MCF 10A (cell line): ENCODE measurements at regions of chr12 and their contacts with region 1.

Region 1: GRCh38 chr12:52495389-52495788 is 2.3 kb upstream of the KRT6A start:
- DNase-seq: peak; percentile 95
- H3K4me3 Mint-ChIP-seq: peak overlapping the region; percentile 93
- H3K27ac Mint-ChIP-seq: peak overlapping the region; percentile 95
- H3K4me1 Mint-ChIP-seq: peaks cover 64% of the 10 kb centered on the region
- H3K27me3 Mint-ChIP-seq: no peaks in the 10 kb centered on the region
- CTCF ChIP-seq: no peak

Region 2: GRCh38 chr12:52372216-52373154 is 122.9 kb before region 1 on chr12:
- CTCF ChIA-PET with region 1: interaction called, 12 read pairs
- POLR2A ChIA-PET with region 1: interaction called, 28 read pairs
- intact Hi-C with region 1: no loop called
- DNase-seq: peak; percentile 86
- H3K4me3 Mint-ChIP-seq: no peak overlapping the region
- H3K27ac Mint-ChIP-seq: no peak overlapping the region
- H3K4me1 Mint-ChIP-seq: no peaks in the 10 kb centered on the region
- H3K27me3 Mint-ChIP-seq: peaks cover 11% of the 10 kb centered on the region
- CTCF ChIP-seq: peak; percentile 90

Region 3: GRCh38 chr12:52398176-52398829 is 97.1 kb before region 1 on chr12:
- CTCF ChIA-PET with region 1: interaction called, 16 read pairs
- POLR2A ChIA-PET with region 1: interaction called, 24 read pairs
- intact Hi-C with region 1: no loop called
- DNase-seq: no peak
- H3K4me3 Mint-ChIP-seq: no peak overlapping the region
- H3K27ac Mint-ChIP-seq: no peak overlapping the region
- H3K4me1 Mint-ChIP-seq: peaks cover 15% of the 10 kb centered on the region
- H3K27me3 Mint-ChIP-seq: no peaks in the 10 kb centered on the region
- CTCF ChIP-seq: no peak

Region 4: DNA sequence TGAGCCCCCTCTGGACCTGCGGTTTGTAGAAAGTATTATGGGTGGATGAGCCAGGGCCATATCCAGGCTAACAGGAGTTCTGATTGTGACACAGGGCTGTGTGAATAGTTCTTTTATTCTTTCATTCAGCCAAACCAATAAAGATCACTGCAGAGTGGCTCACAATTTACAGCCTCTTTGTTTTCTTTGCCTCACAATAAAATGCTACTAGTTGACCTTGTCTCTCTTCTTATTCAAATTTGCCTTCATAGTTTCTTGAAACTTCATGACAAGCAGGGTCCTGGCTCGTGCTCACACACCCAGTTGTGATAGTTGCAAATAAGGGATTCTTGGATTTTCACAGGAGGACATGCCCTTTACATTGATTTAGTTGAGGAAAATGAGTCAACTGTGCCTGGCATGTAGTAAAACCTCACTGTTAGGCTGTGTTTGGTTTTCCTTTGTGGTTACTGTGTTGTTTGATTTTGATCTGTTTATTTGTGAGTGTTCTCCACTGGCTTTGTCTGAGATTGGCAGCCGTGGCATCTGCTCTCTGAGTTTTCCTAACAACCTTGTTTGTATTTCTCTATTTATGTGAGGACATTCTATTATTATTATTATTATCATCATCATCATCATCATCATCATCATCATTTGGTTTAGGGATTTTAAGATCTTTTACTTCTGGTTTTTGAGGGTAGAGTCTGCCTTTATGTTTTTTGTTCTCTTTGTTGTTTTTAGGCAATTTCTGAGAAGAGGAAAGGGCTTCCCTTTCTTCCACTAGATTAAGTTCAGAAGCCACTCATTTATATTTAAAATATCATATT is 40.8 kb before region 1 on chr12:
- CTCF ChIA-PET with region 1: no interaction called
- POLR2A ChIA-PET with region 1: interaction called, 30 read pairs
- intact Hi-C with region 1: no loop called
- DNase-seq: peak; percentile 60
- H3K4me3 Mint-ChIP-seq: no peak overlapping the region
- H3K27ac Mint-ChIP-seq: no peak overlapping the region
- H3K4me1 Mint-ChIP-seq: peaks cover 29% of the 10 kb centered on the region
- H3K27me3 Mint-ChIP-seq: no peaks in the 10 kb centered on the region
- CTCF ChIP-seq: no peak

Region 5: DNA sequence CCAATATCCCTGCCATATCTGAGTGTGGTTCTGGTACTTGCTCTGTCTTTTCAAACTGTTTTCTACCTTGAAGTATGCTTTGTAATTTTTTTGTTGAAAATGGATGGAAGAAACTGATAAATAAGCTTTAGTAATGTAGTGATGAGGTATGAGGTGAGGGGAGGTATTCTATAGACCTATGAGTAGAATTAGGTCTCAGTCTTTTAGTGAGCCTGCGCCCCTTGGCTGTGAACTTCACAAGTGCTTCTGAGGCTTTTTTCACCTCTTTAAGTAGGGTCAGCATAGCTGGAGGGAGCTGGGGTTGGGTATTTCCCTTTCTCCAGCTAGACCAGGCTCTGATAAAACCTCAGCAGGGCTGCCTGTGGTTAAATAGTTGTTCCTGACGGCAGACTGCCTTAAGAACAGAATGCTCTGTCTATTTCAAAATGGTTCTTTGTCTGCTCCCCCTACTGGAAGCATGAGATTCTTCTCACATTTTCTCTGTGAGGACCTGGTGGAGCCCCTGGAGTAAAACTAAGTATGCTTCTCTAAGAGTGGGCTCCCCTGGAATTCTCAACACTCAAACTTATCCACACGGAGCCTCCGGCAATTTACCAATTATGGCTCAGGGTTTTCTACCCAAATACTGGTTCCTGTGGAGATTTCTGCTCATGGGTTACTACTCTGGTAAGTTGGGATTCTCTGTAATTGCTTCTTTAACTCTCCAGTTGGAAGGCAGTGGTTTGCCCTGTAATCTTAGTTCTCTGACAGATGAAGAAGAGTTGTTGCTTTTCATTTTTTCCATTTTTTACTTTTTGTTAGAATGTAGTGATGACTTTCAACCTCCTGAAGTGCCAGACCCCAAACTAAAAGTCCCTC is 11.7 kb after region 1 on chr12:
- CTCF ChIA-PET with region 1: interaction called, 50 read pairs
- POLR2A ChIA-PET with region 1: interaction called, 1,235 read pairs
- intact Hi-C with region 1: no loop called
- DNase-seq: peak; percentile 75
- H3K4me3 Mint-ChIP-seq: no peak overlapping the region
- H3K27ac Mint-ChIP-seq: peak overlapping the region; percentile 4
- H3K4me1 Mint-ChIP-seq: peaks cover 18% of the 10 kb centered on the region
- H3K27me3 Mint-ChIP-seq: no peaks in the 10 kb centered on the region
- CTCF ChIP-seq: peak; percentile 50

Region 6: DNA sequence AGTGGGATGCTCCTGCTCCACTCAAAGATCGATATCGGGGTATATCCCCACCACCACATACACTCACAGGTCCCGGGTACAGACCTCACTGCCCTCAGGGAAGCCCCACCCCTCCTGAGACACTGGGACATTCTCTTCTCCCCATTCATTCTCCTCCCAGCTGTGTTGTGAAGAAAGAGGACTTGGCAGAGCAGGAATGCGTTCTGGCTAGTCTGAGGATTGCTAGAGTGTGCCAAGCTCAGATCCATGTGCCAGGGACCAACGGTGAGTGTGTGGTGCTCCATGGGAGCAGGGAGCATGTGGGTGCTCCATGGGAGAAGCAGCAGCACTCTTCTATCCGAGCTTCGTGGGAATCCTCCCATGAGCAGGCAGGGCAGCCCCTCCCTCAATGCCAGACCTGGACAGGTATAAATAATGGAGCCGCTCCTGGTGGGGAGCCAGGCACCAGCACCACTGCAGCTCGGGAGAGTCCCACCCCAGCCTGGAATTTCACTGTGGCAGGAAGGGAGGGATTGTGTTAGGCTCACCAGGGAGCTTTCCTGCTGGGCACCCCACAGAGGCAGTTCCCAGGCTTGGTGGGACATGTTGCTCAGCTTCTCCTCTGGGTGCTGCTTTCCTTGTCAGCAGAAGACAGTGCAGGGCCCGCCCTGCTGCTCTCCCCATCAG is 27.1 kb after region 1 on chr12:
- CTCF ChIA-PET with region 1: interaction called, 24 read pairs
- POLR2A ChIA-PET with region 1: interaction called, 1,235 read pairs
- intact Hi-C with region 1: loop called (anchors 1 kb)
- DNase-seq: peak; percentile 98
- H3K4me3 Mint-ChIP-seq: peak overlapping the region; percentile 80
- H3K27ac Mint-ChIP-seq: peak overlapping the region; percentile 96
- H3K4me1 Mint-ChIP-seq: peaks cover 44% of the 10 kb centered on the region
- H3K27me3 Mint-ChIP-seq: no peaks in the 10 kb centered on the region
- CTCF ChIP-seq: no peak

Region 7: DNA sequence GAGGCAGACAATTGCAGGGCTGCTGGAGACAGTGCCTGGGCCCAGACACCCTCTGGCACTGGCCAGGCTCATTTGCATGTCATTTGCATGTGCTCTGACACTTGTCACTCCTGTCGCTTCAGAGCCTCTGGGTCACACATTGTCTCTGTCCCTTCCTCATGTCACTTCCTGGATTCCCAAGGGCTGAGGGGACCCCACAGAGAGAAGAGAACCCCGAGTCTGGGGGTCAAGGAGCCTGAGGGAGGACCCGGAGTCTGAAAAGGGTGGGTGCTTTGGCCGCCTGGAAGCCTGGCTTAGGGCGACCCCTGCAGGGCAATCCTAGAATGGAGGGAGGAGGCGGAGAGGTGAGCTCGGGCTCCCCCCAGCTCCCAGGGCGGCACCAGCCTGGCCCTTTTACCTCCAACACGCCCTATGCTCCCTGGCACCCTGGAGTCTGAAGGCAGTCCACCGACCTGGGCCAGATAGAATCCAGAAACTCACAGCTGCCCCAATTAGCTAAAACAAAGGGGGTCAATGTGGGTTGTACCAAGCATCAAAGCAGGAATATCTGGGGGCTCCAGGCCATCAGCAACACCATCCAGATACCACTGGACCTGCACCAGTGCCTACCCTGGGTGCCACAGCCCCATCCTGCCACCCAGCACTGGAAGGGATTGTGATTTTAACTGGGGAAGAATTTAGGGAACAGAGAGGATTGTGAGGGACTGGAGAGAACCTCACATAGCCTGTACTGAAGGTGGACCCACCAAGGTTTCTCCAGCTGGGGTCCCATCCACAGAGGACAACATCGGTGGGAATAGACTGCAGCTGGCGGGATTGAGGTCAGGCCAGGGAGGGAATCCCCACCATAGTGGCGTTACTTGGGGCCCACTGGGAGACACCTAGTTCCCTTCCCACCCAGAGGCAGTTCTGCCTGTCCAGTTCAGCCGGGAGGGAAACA is 375.2 kb after region 1 on chr12:
- CTCF ChIA-PET with region 1: interaction called, 7 read pairs
- POLR2A ChIA-PET with region 1: interaction called, 141 read pairs
- intact Hi-C with region 1: loop called (anchors 2 kb)
- DNase-seq: peak; percentile 84
- H3K4me3 Mint-ChIP-seq: peak overlapping the region; percentile 14
- H3K27ac Mint-ChIP-seq: peak overlapping the region; percentile 90
- H3K4me1 Mint-ChIP-seq: peaks cover 77% of the 10 kb centered on the region
- H3K27me3 Mint-ChIP-seq: no peaks in the 10 kb centered on the region
- CTCF ChIP-seq: peak; percentile 95